PC-9 (cell line): ENCODE measurements at regions of chr11 and their contacts with region 1.

Region 1: GRCh38 chr11:67332081-67332691 is 21.2 kb downstream of the POLD4 start:
- DNase-seq: peak in 1 of 2 experiments; percentile 45
- H3K4me3 ChIP-seq: no peak overlapping the region
- H3K27ac ChIP-seq: no peak overlapping the region
- H3K4me1 ChIP-seq: no peaks in the 10 kb centered on the region
- H3K27me3 ChIP-seq: no peaks in the 10 kb centered on the region
- CTCF ChIP-seq: no peak

Region 2: DNA sequence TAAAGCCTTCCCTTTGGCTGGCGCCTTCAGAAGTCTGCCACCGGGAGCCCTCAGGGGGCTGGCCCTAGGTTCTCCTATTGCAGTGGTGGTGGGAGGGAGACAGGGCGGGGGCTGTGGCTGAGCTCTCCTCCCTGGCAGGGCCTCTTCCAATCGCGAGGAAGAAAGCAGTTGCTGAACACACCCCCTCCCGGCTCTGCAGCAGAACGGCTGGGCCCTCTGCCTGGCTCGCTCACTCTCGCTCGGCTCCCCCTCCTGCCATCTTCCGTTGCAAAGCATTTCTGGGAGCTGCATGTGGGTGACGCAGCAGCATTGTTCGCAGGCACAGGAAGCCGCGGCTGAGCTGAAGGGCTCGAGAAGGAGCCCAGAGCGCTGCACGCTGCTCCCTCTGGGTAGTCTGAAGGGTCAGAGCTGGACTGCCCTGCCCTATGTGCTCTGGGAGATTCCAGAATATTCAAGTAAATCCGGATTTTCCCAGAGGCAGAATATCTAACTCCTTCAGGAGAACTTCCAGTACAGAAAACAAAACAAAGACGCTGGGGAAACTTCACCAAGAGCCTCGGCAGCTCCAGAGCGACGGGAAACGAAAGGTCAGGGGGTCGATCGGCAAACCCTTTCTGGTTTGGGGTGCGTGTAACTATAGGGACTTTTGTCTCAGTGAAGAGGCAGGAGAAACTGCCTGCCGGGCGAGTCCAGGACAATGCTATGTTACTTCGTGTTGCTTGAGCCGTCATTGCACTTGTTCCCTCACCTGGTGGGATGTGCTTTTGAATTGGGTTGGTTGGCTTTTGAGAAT is 92.2 kb before region 1 on chr11:
- CTCF ChIA-PET with region 1: no interaction called
- POLR2A ChIA-PET with region 1: no interaction called
- intact Hi-C with region 1: no loop called
- DNase-seq: peak; percentile 99
- H3K4me3 ChIP-seq: peak overlapping the region; percentile 82
- H3K27ac ChIP-seq: peak overlapping the region; percentile 80
- H3K4me1 ChIP-seq: peaks cover 54% of the 10 kb centered on the region
- H3K27me3 ChIP-seq: no peaks in the 10 kb centered on the region
- CTCF ChIP-seq: no peak

Region 3: GRCh38 chr11:67428052-67428914 is 96.1 kb after region 1 on chr11 and contains the start of gene RPS6KB2:
- CTCF ChIA-PET with region 1: interaction called, 10 read pairs
- POLR2A ChIA-PET with region 1: no interaction called
- intact Hi-C with region 1: no loop called
- DNase-seq: peak; percentile 91 to 98
- H3K4me3 ChIP-seq: peak within 1 kb of the TSS; percentile 95
- H3K27ac ChIP-seq: peak within 1 kb of the TSS; percentile 39
- H3K4me1 ChIP-seq: peaks cover 21% of the 10 kb centered on the region
- H3K27me3 ChIP-seq: no peaks in the 10 kb centered on the region
- CTCF ChIP-seq: no peak
- total RNA-seq, gene RPS6KB2: 52.0 and 54.0 TPM in 2 replicates